ENCODE measurements at regions of chr12 and their contacts with region 1.

Region 1: DNA sequence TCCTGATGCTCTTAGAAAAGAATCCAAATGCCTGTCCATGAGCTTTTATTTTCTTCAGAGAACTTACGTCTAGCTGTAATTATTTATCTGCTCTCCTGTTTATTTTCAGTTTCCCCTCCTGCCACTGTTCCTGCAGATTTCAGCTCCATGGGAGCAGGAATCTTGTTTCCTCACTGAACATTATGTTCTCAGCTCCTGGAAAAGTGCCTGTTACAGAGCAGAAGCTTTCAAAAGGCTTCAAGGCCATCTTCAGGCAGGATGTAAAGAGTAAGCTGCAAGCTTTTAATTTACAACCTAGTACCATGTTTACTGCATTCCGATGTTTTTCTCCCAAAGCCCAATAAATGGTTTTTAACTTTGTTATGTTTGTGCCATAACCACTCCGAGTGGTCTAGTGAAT is 98.4 kb upstream of the BTG1 start:
- DNase-seq: peak; percentile 54
- H3K4me3 ChIP-seq: no peak overlapping the region
- H3K27ac ChIP-seq: peak overlapping the region; percentile 33 to 55
- H3K4me1 ChIP-seq: no peaks in the 10 kb centered on the region
- H3K27me3 ChIP-seq: no peaks in the 10 kb centered on the region
- CTCF ChIP-seq: peak in 2 of 4 experiments; percentile 22 to 38
- POLR2A ChIP-seq: no peak

Region 2: DNA sequence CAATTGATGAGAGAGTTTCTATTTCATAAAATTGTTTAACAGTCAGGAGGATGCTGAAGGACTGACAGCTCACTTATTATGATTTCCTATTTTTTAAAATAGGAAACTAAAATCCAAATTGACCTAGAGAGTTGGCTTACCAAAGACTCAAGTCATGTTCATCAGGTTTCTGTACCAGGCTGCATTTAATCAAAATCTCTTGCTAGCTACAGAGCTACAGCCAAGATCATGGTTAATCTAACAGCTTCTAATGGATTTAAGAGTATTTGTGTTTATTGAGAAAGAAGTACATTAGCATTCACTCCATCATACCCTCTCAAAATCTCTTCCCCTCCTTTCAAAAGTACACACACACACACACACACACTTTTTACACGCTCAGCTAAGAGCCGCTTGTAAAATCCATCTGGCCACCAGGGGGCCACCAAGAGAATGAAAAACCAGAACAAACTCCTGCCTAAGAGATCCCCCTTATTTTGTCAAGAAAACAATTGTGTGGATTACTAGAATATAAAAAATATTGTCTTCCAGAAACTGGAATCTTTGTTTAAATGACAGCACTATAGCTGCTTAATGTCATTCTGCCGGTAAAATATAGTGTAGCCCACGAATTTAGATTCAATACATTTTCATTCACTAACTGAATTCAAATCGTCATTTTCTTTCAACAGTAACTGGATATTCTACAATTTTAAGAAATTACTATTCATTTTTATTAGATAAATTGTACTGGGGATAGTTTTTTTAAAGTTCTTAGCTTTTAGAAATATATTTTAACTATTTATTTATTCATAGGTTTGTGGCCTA is 432.4 kb before region 1 on chr12:
- intact Hi-C with region 1: loop called (anchors 10 kb)
- DNase-seq: peak; percentile 50
- H3K4me3 ChIP-seq: no peak overlapping the region
- H3K27ac ChIP-seq: no peak overlapping the region
- H3K4me1 ChIP-seq: no peaks in the 10 kb centered on the region
- H3K27me3 ChIP-seq: no peaks in the 10 kb centered on the region
- CTCF ChIP-seq: peak; percentile 62 to 83 (median 72)
- POLR2A ChIP-seq: no peak

Measured in prostate gland (tissue), 2 donors.